B cell (primary cell): ENCODE measurements at regions of chr7 and their contacts with region 1.

Region 1: GRCh38 chr7:130875265-130875741 is 141.3 kb upstream of the KLF14 start:
- DNase-seq: peak; percentile 53
- ATAC-seq: peak; percentile 82
- H3K4me3 ChIP-seq: no peak overlapping the region
- H3K4me3 Mint-ChIP-seq: no peak overlapping the region
- H3K27ac ChIP-seq: no peak overlapping the region
- H3K27ac Mint-ChIP-seq: no peak overlapping the region
- H3K4me1 ChIP-seq: no peaks in the 10 kb centered on the region
- H3K4me1 Mint-ChIP-seq: peaks cover 9% of the 10 kb centered on the region
- H3K27me3 ChIP-seq: no peaks in the 10 kb centered on the region
- H3K27me3 Mint-ChIP-seq: no peaks in the 10 kb centered on the region
- CTCF ChIP-seq: peak; percentile 89

Region 2: GRCh38 chr7:130912862-130913631 is 37.7 kb after region 1 on chr7:
- CTCF ChIA-PET with region 1: no interaction called
- POLR2A ChIA-PET with region 1: no interaction called
- intact Hi-C with region 1: no loop called
- DNase-seq: peak; percentile 92
- ATAC-seq: peak; percentile 91
- H3K4me3 ChIP-seq: peak overlapping the region; percentile 54 to 98 (median 73)
- H3K4me3 Mint-ChIP-seq: peak overlapping the region; percentile 90
- H3K27ac ChIP-seq: peak overlapping the region; percentile 82 to 98
- H3K27ac Mint-ChIP-seq: peak overlapping the region; percentile 84
- H3K4me1 ChIP-seq: peaks cover 28 to 37% of the 10 kb centered on the region in 2 donors
- H3K4me1 Mint-ChIP-seq: peaks cover 78% of the 10 kb centered on the region
- H3K27me3 ChIP-seq: no peaks in the 10 kb centered on the region
- H3K27me3 Mint-ChIP-seq: no peaks in the 10 kb centered on the region
- CTCF ChIP-seq: no peak

Region 3: DNA sequence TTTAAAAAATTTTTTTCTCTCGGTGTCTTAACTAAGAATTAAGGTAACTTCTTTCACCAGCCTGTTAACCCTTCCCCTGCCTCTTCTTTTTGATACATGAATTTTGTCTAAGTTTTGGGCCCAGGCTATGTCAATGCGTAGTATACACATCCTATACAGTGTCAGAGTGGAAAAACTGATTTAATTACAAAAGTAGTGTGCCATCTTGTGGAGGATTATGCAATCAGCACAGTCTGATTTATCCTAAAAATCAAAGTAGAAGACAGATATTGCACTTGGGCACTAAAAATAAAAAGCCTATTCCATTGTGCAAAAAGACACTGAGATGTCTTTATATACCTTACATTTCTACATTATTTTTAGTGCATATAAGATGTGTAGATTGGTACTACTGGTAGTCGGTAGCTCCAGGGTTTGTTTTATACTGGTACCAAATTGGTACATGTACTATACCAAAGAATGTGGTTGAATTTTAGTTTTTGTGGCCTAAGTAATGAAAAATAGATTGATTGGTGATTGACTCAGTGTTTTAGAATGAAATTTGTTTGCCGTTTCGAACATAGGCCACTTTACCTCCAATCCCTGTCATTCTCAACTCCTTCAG is 549.0 kb after region 1 on chr7:
- CTCF ChIA-PET with region 1: interaction called, 3 read pairs
- POLR2A ChIA-PET with region 1: no interaction called
- intact Hi-C with region 1: loop called (anchors 5 kb)
- DNase-seq: peak; percentile 56
- ATAC-seq: peak; percentile 69
- H3K4me3 ChIP-seq: no peak overlapping the region
- H3K4me3 Mint-ChIP-seq: no peak overlapping the region
- H3K27ac ChIP-seq: no peak overlapping the region
- H3K27ac Mint-ChIP-seq: no peak overlapping the region
- H3K4me1 ChIP-seq: no peaks in the 10 kb centered on the region
- H3K4me1 Mint-ChIP-seq: peaks cover 2% of the 10 kb centered on the region
- H3K27me3 ChIP-seq: no peaks in the 10 kb centered on the region
- H3K27me3 Mint-ChIP-seq: no peaks in the 10 kb centered on the region
- CTCF ChIP-seq: peak; percentile 80